Sigmoid colon (tissue), 7 donors: ENCODE measurements at regions of chr12 and their contacts with region 1.

Region 1: GRCh38 chr12:109880016-109880931 is at the start of gene GLTP:
- DNase-seq: peak; percentile 89
- H3K4me3 ChIP-seq: peak within 1 kb of the TSS; percentile 67 to 94 (median 84)
- H3K27ac ChIP-seq: peak within 1 kb of the TSS; percentile 74 to 86 (median 80)
- H3K4me1 ChIP-seq: peaks cover 0 to 28% (median 25%) of the 10 kb centered on the region in 4 donors
- H3K27me3 ChIP-seq: no peaks in the 10 kb centered on the region
- CTCF ChIP-seq: peak in 1 of 4 experiments; percentile 51
- EP300 ChIP-seq: no peak
- POLR2A ChIP-seq: no peak
- total RNA-seq, gene GLTP: 33.5 to 45.3 (median 40.3) TPM

Region 2: DNA sequence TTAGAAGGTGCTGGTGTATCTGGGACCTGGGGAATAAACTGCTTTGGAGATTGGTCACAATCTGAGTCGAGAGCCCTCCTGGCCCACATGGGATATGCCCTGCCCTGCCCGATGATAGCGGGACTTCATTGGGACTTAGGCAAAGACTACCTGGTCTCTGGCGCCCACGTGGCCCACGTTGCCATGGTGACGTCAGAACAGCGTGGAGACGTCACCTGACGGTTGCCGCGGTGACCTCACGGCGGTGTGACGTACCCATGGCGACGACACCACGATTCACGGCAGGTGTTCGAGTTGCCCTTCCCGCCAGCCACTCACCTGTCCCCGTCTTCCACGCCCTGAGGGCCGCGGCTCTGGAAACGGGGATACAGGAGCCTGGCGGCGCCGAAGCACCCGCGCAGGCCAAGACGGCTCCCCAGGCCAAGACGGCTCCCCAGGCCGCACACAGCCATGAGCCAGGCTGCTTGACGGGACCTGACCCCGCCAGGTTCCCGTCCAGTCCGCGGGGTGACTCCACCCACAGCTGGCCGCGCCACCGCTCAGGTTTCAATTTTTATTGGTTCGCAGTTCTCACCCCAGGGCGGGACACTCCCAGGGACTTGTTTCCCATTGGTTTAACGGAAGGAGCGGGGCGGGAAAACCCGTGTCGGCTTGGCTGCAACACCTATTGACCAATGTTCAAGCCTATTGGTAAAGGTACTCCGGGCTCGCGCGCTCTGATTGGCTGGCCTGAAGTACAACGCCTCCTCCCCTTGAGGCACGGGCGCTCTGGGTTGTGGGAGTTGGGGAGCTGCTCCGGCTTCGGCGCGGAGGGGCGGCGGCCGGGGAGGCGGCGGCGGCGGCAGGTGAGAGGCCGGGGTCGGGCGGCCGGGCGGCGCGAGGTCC is 307.0 kb before region 1 on chr12 and contains the starts of genes MMAB and MVK:
- intact Hi-C with region 1: loop called (anchors 10 kb)
- DNase-seq: peak; percentile 100
- H3K4me3 ChIP-seq: peak within 1 kb of the TSS; percentile 73 to 85 (median 80)
- H3K27ac ChIP-seq: peak within 1 kb of the TSS; percentile 73 to 85 (median 81)
- H3K4me1 ChIP-seq: peaks cover 0 to 20% (median 17%) of the 10 kb centered on the region in 4 donors
- H3K27me3 ChIP-seq: no peaks in the 10 kb centered on the region
- CTCF ChIP-seq: no peak
- EP300 ChIP-seq: peak in 1 of 4 donors; percentile 23
- POLR2A ChIP-seq: peak in 1 of 2 donors; percentile 58
- total RNA-seq, gene MMAB: 12.2 to 28.9 (median 23.5) TPM
- total RNA-seq, gene MVK: 9.1 to 14.8 (median 12.3) TPM

Region 3: GRCh38 chr12:109804820-109805761 is 75.2 kb before region 1 on chr12:
- intact Hi-C with region 1: loop called (anchors 1 kb)
- DNase-seq: peak; percentile 84
- H3K4me3 ChIP-seq: no peak overlapping the region
- H3K27ac ChIP-seq: no peak overlapping the region
- H3K4me1 ChIP-seq: no peaks in the 10 kb centered on the region
- H3K27me3 ChIP-seq: no peaks in the 10 kb centered on the region
- CTCF ChIP-seq: peak; percentile 78 to 98 (median 86)
- EP300 ChIP-seq: no peak
- POLR2A ChIP-seq: no peak